ENCODE measurements at regions of chr9 and their contacts with region 1.

Region 1: GRCh38 chr9:71806901-71807307 is 38.6 kb upstream of the CEMIP2 start:
- DNase-seq: peak; percentile 74
- H3K4me3 ChIP-seq: no peak overlapping the region
- H3K27ac ChIP-seq: no peak overlapping the region
- H3K4me1 ChIP-seq: no peaks in the 10 kb centered on the region
- H3K27me3 ChIP-seq: peaks cover 0 to 3% of the 10 kb centered on the region in 2 experiments
- CTCF ChIP-seq: peak; percentile 77 to 85
- POLR2A ChIP-seq: no peak

Region 2: GRCh38 chr9:71795097-71795813 is 11.6 kb before region 1 on chr9:
- CTCF ChIA-PET with region 1: interaction called, 15 read pairs
- POLR2A ChIA-PET with region 1: no interaction called
- dilution Hi-C with region 1: no loop called
- intact Hi-C with region 1: no loop called
- DNase-seq: no peak
- H3K4me3 ChIP-seq: no peak overlapping the region
- H3K27ac ChIP-seq: no peak overlapping the region
- H3K4me1 ChIP-seq: no peaks in the 10 kb centered on the region
- H3K27me3 ChIP-seq: no peaks in the 10 kb centered on the region
- CTCF ChIP-seq: no peak
- POLR2A ChIP-seq: no peak

Region 3: GRCh38 chr9:71819115-71819739 is 12.3 kb after region 1 on chr9:
- CTCF ChIA-PET with region 1: interaction called, 20 read pairs
- POLR2A ChIA-PET with region 1: no interaction called
- dilution Hi-C with region 1: no loop called
- intact Hi-C with region 1: no loop called
- DNase-seq: peak; percentile 35
- H3K4me3 ChIP-seq: no peak overlapping the region
- H3K27ac ChIP-seq: no peak overlapping the region
- H3K4me1 ChIP-seq: peaks cover 4% of the 10 kb centered on the region
- H3K27me3 ChIP-seq: peaks cover 0 to 2% of the 10 kb centered on the region in 2 experiments
- CTCF ChIP-seq: peak; percentile 44 to 49
- POLR2A ChIP-seq: no peak

Region 4: DNA sequence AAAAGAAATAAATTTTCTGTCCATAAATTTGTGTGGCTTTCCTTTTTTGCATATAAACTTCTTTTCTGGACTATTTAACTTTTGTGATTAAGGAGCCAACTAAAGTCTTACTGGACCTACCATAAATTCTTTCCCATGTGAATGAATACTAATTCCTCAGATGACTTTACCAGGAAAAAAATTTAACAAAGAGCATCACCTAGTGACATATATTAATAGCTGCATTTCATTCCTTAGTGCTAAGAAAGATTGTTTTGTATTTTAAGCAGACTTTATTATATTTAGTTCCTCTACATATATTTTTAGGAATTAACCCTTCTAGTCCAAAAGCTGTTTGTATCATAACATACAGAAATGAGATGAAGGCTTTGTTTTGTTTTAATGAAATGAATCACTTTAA is 168.9 kb after region 1 on chr9:
- CTCF ChIA-PET with region 1: interaction called, 12 read pairs
- POLR2A ChIA-PET with region 1: no interaction called
- dilution Hi-C with region 1: no loop called
- intact Hi-C with region 1: loop called (anchors 5 kb)
- DNase-seq: no peak
- H3K4me3 ChIP-seq: no peak overlapping the region
- H3K27ac ChIP-seq: no peak overlapping the region
- H3K4me1 ChIP-seq: no peaks in the 10 kb centered on the region
- H3K27me3 ChIP-seq: no peaks in the 10 kb centered on the region
- CTCF ChIP-seq: no peak
- POLR2A ChIP-seq: no peak